Panc1 (cell line): ENCODE measurements at regions of chr19 and their contacts with region 1.

Region 1: GRCh38 chr19:10305139-10305806 is 4.3 kb downstream of the ZGLP1 start:
- DNase-seq: no peak
- ATAC-seq: no peak
- H3K4me3 ChIP-seq: no peak overlapping the region
- H3K27ac ChIP-seq: no peak overlapping the region
- H3K4me1 ChIP-seq: no peaks in the 10 kb centered on the region
- H3K27me3 ChIP-seq: no peaks in the 10 kb centered on the region
- CTCF ChIP-seq: no peak

Region 2: GRCh38 chr19:10315335-10316214 is 10.3 kb after region 1 on chr19 and contains the start of gene FDX2:
- CTCF ChIA-PET with region 1: no interaction called
- POLR2A ChIA-PET with region 1: interaction called, 10 read pairs
- in situ Hi-C with region 1: no loop called
- intact Hi-C with region 1: no loop called
- DNase-seq: no peak
- ATAC-seq: peak; percentile 87
- H3K4me3 ChIP-seq: peak within 1 kb of the TSS; percentile 61 to 78
- H3K27ac ChIP-seq: peak within 1 kb of the TSS; percentile 86
- H3K4me1 ChIP-seq: peaks cover 6% of the 10 kb centered on the region
- H3K27me3 ChIP-seq: no peaks in the 10 kb centered on the region
- CTCF ChIP-seq: no peak
- total RNA-seq, gene FDX2: 25.5 TPM

Region 3: DNA sequence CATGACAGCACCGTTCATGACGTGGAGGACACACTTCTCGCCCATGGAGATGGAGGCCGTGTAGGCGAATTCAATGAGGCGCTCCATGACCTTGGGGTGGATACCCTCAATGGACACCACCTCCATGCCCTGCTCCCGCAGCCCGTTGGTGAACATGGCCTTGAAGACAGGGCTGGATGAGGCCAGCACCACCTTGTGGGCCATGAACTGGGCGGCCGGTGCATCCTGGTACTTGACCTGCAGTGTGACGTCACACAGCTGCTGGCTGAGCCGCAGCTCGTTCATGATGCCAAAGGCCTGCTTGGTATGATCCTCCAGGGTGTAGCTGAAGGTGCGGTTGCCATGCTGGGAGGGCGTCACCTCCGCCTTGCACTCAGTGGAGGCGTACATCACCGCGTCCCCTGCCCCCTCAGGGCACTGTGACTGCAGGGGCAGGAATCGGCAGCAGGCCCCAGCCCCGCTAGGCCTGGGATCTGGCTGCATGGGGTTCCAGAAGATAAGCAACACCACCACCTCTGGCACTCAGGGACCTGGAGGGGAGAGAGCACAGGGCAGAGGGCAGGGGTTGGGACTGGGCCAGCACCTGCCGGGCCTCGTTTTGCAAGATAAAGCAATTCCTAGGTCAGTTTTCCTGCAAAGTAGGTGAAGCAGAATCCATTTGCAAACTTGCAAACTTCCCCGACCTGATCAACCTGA is 194.4 kb after region 1 on chr19:
- CTCF ChIA-PET with region 1: no interaction called
- POLR2A ChIA-PET with region 1: no interaction called
- in situ Hi-C with region 1: no loop called
- intact Hi-C with region 1: no loop called
- DNase-seq: no peak
- ATAC-seq: no peak
- H3K4me3 ChIP-seq: no peak overlapping the region
- H3K27ac ChIP-seq: no peak overlapping the region
- H3K4me1 ChIP-seq: peaks cover 9% of the 10 kb centered on the region
- H3K27me3 ChIP-seq: no peaks in the 10 kb centered on the region
- CTCF ChIP-seq: no peak